ENCODE measurements at regions of chr4 and their contacts with region 1.

Region 1: DNA sequence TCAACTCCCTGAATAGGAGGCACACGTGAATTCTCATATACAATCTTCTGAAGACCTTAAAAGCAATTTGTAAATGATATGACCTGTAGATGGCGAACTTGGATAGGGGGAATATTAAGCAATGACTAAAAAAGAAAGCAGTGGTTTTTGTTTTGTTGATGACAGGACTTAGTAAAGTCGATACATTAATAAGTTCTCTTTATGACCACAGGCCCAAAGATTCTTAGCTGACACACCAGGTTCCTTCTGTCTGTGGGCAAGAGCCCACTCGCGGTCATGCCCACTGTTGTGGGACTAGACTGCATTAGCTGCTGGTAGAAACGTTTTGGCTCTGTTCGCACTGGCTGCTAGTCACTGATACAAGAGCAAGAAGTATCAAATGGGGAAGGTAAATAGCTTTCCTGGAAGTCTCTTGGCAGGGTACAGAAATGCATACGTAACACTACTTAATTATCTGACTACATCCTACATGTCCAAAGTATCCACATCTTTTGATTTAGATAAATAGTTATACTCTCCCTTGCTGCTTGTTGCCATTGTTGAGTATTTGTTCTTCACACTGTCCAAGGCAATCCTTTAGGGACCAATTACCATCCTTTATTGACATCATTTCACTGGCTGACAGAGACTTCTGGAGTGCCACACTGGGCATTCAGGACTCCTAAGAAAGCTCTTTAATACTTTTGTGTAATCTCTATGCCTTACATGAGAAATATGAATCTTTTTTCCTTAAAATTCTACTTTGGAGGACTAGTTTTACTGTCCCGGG is 31.0 kb downstream of the ALPK1 start:
- DNase-seq: no peak
- ATAC-seq: peak in 1 of 2 donors; percentile 58
- H3K4me3 ChIP-seq: no peak overlapping the region
- H3K27ac ChIP-seq: no peak overlapping the region
- H3K4me1 ChIP-seq: no peaks in the 10 kb centered on the region
- H3K27me3 ChIP-seq: no peaks in the 10 kb centered on the region
- CTCF ChIP-seq: peak in 4 of 5 experiments; percentile 19 to 53 (median 38)
- POLR2A ChIP-seq: no peak

Region 2: GRCh38 chr4:112266821-112267220 is 61.3 kb before region 1 on chr4:
- in situ Hi-C with region 1: no loop called
- intact Hi-C with region 1: no loop called
- DNase-seq: no peak
- ATAC-seq: peak in 1 of 2 donors; percentile 66
- H3K4me3 ChIP-seq: no peak overlapping the region
- H3K27ac ChIP-seq: no peak overlapping the region
- H3K4me1 ChIP-seq: peaks cover 5 to 9% of the 10 kb centered on the region in 2 donors
- H3K27me3 ChIP-seq: no peaks in the 10 kb centered on the region
- CTCF ChIP-seq: peak; percentile 19 to 55 (median 51)
- POLR2A ChIP-seq: no peak

Region 3: GRCh38 chr4:112296949-112297880 is 30.9 kb before region 1 on chr4 and contains the start of gene ALPK1:
- in situ Hi-C with region 1: no loop called
- intact Hi-C with region 1: no loop called
- DNase-seq: peak in 1 of 2 donors; percentile 7
- ATAC-seq: peak; percentile 95 to 100
- H3K4me3 ChIP-seq: peak within 1 kb of the TSS; percentile 38 to 46 (median 42)
- H3K27ac ChIP-seq: peak within 1 kb of the TSS; percentile 34 to 69 (median 62)
- H3K4me1 ChIP-seq: peaks cover 5 to 12% of the 10 kb centered on the region in 2 donors
- H3K27me3 ChIP-seq: no peaks in the 10 kb centered on the region
- CTCF ChIP-seq: no peak
- POLR2A ChIP-seq: peak; percentile 36 to 41
- total RNA-seq, gene ALPK1: 1.8 to 12.6 (median 3.3) TPM

Region 4: GRCh38 chr4:112523764-112524505 is 195.8 kb after region 1 on chr4:
- in situ Hi-C with region 1: loop called in 3 of 4 experiments (anchors 10 kb)
- intact Hi-C with region 1: loop called (anchors 1 kb)
- DNase-seq: no peak
- ATAC-seq: peak; percentile 47 to 58
- H3K4me3 ChIP-seq: peak overlapping the region; percentile 8 to 40 (median 36)
- H3K27ac ChIP-seq: no peak overlapping the region
- H3K4me1 ChIP-seq: peaks cover 15% of the 10 kb centered on the region in 2 donors
- H3K27me3 ChIP-seq: peaks cover 54 to 65% (median 62%) of the 10 kb centered on the region in 3 donors
- CTCF ChIP-seq: peak; percentile 41 to 83 (median 67)
- POLR2A ChIP-seq: no peak

Region 5: DNA sequence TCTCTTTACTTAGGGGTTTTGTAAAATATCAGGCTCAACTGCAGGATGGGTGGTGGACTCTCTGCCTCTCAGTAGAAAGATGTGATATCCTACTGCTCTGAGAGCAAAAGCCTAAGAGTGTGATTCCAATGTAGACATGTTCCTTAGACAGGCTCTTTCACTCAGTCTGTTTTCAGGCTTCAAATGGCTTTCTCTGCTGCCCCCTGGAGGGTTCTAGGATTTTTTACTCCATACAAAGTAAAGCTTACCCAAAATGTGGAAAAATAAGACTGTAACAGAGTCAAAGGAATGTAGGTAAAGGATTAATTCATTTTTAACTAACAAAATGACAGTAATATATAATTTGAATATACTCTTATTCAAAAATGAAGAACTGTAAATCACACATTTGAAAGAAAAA is 276.4 kb after region 1 on chr4:
- in situ Hi-C with region 1: loop called in 2 of 4 experiments (anchors 10 to 25 kb)
- intact Hi-C with region 1: loop called (anchors 5 kb)
- DNase-seq: no peak
- ATAC-seq: no peak
- H3K4me3 ChIP-seq: no peak overlapping the region
- H3K27ac ChIP-seq: no peak overlapping the region
- H3K4me1 ChIP-seq: no peaks in the 10 kb centered on the region
- H3K27me3 ChIP-seq: no peaks in the 10 kb centered on the region
- CTCF ChIP-seq: peak in 3 of 5 experiments; percentile 24 to 51 (median 41)
- POLR2A ChIP-seq: no peak

Region 6: DNA sequence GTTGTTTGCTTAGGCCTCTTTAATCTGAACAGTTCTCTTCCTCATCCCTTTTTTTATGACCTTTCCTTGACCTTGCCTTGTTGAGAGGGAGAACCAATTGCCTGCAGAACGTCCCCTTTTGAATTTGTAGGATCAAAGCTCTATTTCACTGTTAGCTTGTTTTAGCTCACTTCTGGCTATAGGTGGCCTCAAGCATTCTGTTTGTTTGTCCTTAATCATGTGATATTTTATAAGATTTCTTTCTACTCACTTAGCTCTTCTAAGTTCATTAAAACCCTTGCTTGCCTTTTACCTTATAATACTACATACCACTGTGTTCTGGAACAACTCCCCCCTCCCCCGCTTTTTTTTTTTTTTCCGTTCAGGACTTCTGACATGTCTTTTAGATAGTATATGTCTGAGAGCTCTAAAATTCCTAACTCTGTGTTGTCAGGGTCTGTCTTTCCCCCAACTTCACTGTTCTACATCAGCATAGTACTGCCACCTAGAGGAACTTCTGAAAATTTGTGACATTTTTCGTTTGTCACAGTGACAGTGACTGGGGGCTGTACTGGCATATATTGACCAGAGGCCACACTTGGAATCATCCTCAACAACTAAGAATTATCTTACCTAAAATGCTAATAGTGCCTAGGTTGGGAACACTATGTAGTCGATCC is 437.3 kb after region 1 on chr4:
- in situ Hi-C with region 1: loop called in 1 of 4 experiments (anchors 25 kb)
- intact Hi-C with region 1: no loop called
- DNase-seq: no peak
- ATAC-seq: peak; percentile 45 to 75
- H3K4me3 ChIP-seq: no peak overlapping the region
- H3K27ac ChIP-seq: no peak overlapping the region
- H3K4me1 ChIP-seq: no peaks in the 10 kb centered on the region
- H3K27me3 ChIP-seq: no peaks in the 10 kb centered on the region
- CTCF ChIP-seq: peak in 4 of 5 experiments; percentile 13 to 59 (median 46)
- POLR2A ChIP-seq: no peak